RWPE1 (cell line): ENCODE measurements at regions of chr12 and their contacts with region 1.

Region 1: GRCh38 chr12:65278576-65279368 is at the start of gene MSRB3:
- DNase-seq: peak; percentile 77
- H3K27ac ChIP-seq: peak within 1 kb of the TSS; percentile 79
- CTCF ChIP-seq: peak; percentile 34

Region 2: DNA sequence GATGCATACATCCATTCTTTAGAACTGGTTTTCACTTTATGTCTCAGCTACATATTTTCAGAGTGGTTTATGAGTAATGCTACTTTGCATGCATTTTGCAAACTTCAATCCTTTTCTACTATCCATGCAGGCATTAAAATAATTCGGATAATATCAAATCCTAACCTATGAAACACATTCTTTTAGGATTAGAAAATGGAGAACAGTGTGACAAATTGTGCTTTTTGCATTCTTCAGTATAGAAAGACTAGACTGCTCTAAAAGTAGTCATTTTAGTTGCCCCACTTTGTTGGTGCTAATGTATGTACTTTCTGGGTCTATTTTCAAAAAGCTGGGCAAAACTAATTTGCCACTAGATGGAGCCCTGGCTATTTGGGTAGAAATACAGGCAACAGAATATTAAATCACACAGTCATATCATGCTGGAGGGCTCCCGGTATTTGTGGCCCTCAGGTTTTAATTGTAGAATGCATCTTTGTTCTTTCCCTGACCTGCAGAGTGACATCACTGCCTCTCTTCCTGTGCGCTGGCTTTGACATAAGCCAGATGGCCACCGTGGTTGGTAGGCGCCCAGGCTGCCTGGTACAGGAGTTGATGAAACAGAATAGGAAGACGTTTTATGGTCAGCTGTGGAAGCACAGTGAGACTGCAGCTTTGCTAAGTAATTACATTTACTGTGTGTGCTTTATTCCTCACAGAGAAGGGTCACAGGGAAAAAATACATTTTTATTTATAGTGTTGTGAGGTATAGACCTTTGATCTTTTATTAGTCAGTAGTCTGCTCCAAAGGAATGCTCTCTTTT is 27.8 kb after region 1 on chr12:
- CTCF ChIA-PET with region 1: interaction called, 12 read pairs
- POLR2A ChIA-PET with region 1: no interaction called
- DNase-seq: peak; percentile 48
- H3K27ac ChIP-seq: peak overlapping the region; percentile 76
- CTCF ChIP-seq: peak; percentile 79